ENCODE measurements at regions of chr12 and their contacts with region 1.

Region 1: DNA sequence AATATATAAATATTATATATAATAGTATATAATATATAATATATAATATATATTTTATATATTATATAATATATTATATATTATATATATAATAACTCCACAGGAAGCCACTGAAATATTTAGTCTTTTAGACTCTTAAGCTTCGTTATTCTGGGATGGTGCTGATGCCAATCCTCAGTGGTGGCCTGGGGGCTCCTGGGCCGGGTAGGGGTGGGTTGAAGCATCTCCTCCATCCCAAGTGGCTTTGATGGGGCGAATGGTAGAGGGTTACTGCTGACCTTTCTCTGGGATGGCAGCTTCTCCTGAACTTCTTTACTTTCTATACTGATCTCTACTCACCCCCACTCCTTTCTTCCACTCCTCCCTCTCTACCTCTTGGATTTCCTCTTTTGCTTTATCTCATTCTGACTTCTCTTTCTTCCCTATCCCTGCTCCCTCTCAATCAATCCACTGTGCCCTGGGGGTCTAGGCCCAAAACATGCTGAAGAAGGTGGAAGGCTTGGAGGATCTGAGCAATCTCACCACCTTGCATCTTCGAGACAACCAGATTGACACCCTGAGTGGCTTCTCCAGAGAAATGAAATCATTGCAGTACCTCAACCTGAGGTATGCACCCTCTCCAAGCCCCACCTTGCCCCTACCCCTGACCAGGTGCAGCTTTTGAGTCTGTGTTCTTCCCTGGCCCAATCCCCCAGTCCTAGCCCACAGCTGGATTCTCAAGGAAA is 4.8 kb upstream of the ENO2 start:
- DNase-seq: peak in 1 of 3 donors; percentile 39
- H3K4me3 ChIP-seq: no peak overlapping the region
- H3K27ac ChIP-seq: no peak overlapping the region
- H3K4me1 ChIP-seq: peaks cover 4 to 18% (median 15%) of the 10 kb centered on the region in 4 experiments
- H3K27me3 ChIP-seq: no peaks in the 10 kb centered on the region

Region 2: GRCh38 chr12:6890789-6891645 is 18.6 kb before region 1 on chr12:
- CTCF ChIA-PET with region 1: interaction called, 22 read pairs
- POLR2A ChIA-PET with region 1: interaction called, 3 read pairs
- DNase-seq: peak; percentile 96 to 99 (median 98)
- H3K4me3 ChIP-seq: peak overlapping the region; percentile 50 to 87 (median 73)
- H3K27ac ChIP-seq: peak overlapping the region; percentile 81 to 93
- H3K4me1 ChIP-seq: peaks cover 6 to 18% (median 15%) of the 10 kb centered on the region in 4 experiments
- H3K27me3 ChIP-seq: no peaks in the 10 kb centered on the region

Region 3: DNA sequence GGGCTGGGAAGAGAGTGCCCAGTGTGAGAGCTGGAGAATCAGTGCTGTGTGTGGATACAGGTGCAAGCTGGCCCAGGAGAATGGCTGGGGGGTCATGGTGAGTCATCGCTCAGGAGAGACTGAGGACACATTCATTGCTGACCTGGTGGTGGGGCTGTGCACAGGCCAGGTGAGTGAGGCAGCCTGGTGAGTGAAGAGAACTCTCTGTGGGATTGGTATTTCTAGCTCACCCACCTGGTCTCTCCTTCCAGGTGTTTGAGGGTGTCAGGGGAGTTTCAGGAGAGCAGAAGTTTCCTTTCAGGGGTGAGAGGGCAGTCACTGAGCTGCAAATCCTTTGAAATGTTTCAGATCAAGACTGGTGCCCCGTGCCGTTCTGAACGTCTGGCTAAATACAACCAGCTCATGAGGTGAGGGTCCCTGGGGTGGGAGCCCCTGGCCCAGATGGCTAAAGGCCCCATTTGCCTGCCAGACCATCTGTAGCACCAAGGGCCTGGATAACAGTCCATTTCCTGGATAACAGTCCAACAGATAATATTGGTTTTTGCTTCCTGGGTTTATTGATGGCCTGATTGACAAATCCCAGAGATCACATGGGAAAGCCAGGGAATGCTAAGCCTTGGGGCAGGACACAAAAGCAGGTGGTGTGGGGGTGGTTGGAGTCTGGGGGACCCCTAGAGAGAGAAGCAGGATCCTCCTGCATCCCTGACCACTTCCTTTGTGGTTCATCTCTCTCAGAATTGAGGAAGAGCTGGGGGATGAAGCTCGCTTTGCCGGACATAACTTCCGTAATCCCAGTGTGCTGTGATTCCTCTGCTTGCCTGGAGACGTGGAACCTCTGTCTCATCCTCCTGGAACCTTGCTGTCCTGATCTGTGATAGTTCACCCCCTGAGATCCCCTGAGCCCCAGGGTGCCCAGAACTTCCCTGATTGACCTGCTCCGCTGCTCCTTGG is 12.7 kb after region 1 on chr12:
- CTCF ChIA-PET with region 1: interaction called, 34 read pairs
- POLR2A ChIA-PET with region 1: interaction called, 6 read pairs
- DNase-seq: no peak
- H3K4me3 ChIP-seq: no peak overlapping the region
- H3K27ac ChIP-seq: peak overlapping the region in 1 of 2 experiments; percentile 3
- H3K4me1 ChIP-seq: peaks cover 5 to 52% (median 38%) of the 10 kb centered on the region in 4 experiments
- H3K27me3 ChIP-seq: no peaks in the 10 kb centered on the region

Region 4: GRCh38 chr12:6978609-6979011 is 69.0 kb after region 1 on chr12:
- CTCF ChIA-PET with region 1: no interaction called
- POLR2A ChIA-PET with region 1: no interaction called
- DNase-seq: peak in 1 of 3 donors; percentile 18
- H3K4me3 ChIP-seq: no peak overlapping the region
- H3K27ac ChIP-seq: peak overlapping the region in 1 of 2 experiments; percentile 37
- H3K4me1 ChIP-seq: peaks cover 0 to 3% (median 0%) of the 10 kb centered on the region in 4 experiments
- H3K27me3 ChIP-seq: no peaks in the 10 kb centered on the region

Region 5: GRCh38 chr12:7129872-7130680 is 220.5 kb after region 1 on chr12 and contains the start of gene CLSTN3:
- CTCF ChIA-PET with region 1: no interaction called
- POLR2A ChIA-PET with region 1: no interaction called
- DNase-seq: peak; percentile 87 to 94 (median 94)
- H3K4me3 ChIP-seq: peak within 1 kb of the TSS; percentile 44 to 90 (median 76)
- H3K27ac ChIP-seq: peak within 1 kb of the TSS in 1 of 2 experiments; percentile 43
- H3K4me1 ChIP-seq: peaks cover 3 to 36% (median 35%) of the 10 kb centered on the region in 4 experiments
- H3K27me3 ChIP-seq: no peaks in the 10 kb centered on the region

Measured in common myeloid progenitor, CD34-positive (primary cell).